CD4-positive, alpha-beta memory T cell (primary cell): ENCODE measurements at regions of chr12 and their contacts with region 1.

Region 1: GRCh38 chr12:57462251-57462911 is 2.8 kb downstream of the GLI1 start:
- DNase-seq: peak; percentile 84 to 88 (median 87)
- H3K4me3 ChIP-seq: peak overlapping the region; percentile 42 to 59
- H3K4me3 Mint-ChIP-seq: peak overlapping the region; percentile 86 to 95 (median 89)
- H3K27ac ChIP-seq: no peak overlapping the region
- H3K27ac Mint-ChIP-seq: peak overlapping the region; percentile 13 to 91 (median 80)
- H3K4me1 ChIP-seq: peaks cover 36% of the 10 kb centered on the region
- H3K4me1 Mint-ChIP-seq: peaks cover 23 to 58% (median 35%) of the 10 kb centered on the region in 4 donors
- H3K27me3 ChIP-seq: peaks cover 12% of the 10 kb centered on the region
- H3K27me3 Mint-ChIP-seq: peaks cover 7 to 18% of the 10 kb centered on the region in 2 donors

Region 2: GRCh38 chr12:57309420-57309819 is 153.0 kb before region 1 on chr12:
- CTCF ChIA-PET with region 1: interaction called, 7 read pairs
- POLR2A ChIA-PET with region 1: no interaction called
- intact Hi-C with region 1: loop called (anchors 5 kb)
- DNase-seq: no peak
- H3K4me3 ChIP-seq: no peak overlapping the region
- H3K4me3 Mint-ChIP-seq: no peak overlapping the region
- H3K27ac ChIP-seq: no peak overlapping the region
- H3K27ac Mint-ChIP-seq: peak overlapping the region in 1 of 7 donors; percentile 40
- H3K4me1 ChIP-seq: no peaks in the 10 kb centered on the region
- H3K4me1 Mint-ChIP-seq: peaks cover 0 to 4% (median 2%) of the 10 kb centered on the region in 4 donors
- H3K27me3 ChIP-seq: no peaks in the 10 kb centered on the region
- H3K27me3 Mint-ChIP-seq: no peaks in the 10 kb centered on the region

Region 3: DNA sequence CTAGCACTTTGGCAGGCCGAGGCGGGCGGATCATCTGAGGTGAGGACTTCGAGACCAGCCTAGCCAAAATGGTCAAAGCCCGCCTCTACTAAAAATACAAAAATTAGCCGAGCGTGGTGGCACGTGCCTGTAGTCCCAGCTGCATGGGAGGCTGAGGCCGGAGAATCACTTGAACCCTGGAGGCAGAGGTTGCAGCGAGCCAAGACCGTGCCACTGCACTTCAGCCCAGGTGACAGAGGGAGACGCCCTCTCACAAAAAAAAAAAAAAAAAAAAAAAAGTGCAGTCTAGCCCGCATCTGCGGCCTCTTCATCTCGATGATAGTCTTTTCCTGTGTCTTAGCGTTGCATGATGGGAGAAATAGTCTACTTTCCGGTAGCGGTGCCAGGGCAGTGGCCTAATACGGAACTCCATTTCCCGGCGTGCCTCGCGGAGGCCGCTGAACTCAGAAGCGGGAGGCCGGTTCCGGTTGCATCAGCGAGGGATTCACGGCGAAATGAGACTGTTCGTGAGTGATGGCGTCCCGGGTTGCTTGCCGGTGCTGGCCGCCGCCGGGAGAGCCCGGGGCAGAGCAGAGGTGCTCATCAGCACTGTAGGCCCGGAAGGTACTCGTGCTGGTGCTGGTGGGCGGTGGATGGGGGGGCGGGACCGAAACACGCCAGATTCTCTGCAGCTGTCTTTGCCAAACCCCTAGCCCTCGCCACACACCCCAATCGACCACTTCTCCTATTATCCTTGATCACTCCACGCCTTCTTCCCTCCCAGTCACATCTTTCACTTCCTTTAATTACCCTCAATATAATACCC is 25.4 kb after region 1 on chr12 and contains the start of gene MARS1:
- CTCF ChIA-PET with region 1: interaction called, 204 read pairs
- POLR2A ChIA-PET with region 1: interaction called, 225 read pairs
- intact Hi-C with region 1: loop called (anchors 1 kb)
- DNase-seq: peak; percentile 90 to 97 (median 94)
- H3K4me3 ChIP-seq: peak within 1 kb of the TSS; percentile 78 to 95
- H3K4me3 Mint-ChIP-seq: peak within 1 kb of the TSS; percentile 95 to 99 (median 98)
- H3K27ac ChIP-seq: peak within 1 kb of the TSS; percentile 84
- H3K27ac Mint-ChIP-seq: peak within 1 kb of the TSS; percentile 90 to 99 (median 98)
- H3K4me1 ChIP-seq: peaks cover 23% of the 10 kb centered on the region
- H3K4me1 Mint-ChIP-seq: peaks cover 22 to 43% (median 28%) of the 10 kb centered on the region in 4 donors
- H3K27me3 ChIP-seq: no peaks in the 10 kb centered on the region
- H3K27me3 Mint-ChIP-seq: no peaks in the 10 kb centered on the region
- total RNA-seq, gene MARS1: 224 to 242 TPM

Region 4: GRCh38 chr12:57546438-57547383 is 84.3 kb after region 1 on chr12 and contains the start of gene DCTN2:
- CTCF ChIA-PET with region 1: interaction called, 15 read pairs
- POLR2A ChIA-PET with region 1: interaction called, 12 read pairs
- intact Hi-C with region 1: no loop called
- DNase-seq: peak; percentile 91 to 97 (median 93)
- H3K4me3 ChIP-seq: peak within 1 kb of the TSS; percentile 54 to 71
- H3K4me3 Mint-ChIP-seq: peak within 1 kb of the TSS; percentile 93 to 100 (median 98)
- H3K27ac ChIP-seq: peak within 1 kb of the TSS; percentile 84
- H3K27ac Mint-ChIP-seq: peak within 1 kb of the TSS; percentile 84 to 99 (median 97)
- H3K4me1 ChIP-seq: peaks cover 37% of the 10 kb centered on the region
- H3K4me1 Mint-ChIP-seq: peaks cover 32 to 53% (median 42%) of the 10 kb centered on the region in 4 donors
- H3K27me3 ChIP-seq: no peaks in the 10 kb centered on the region
- H3K27me3 Mint-ChIP-seq: peaks cover 2 to 4% of the 10 kb centered on the region in 2 donors
- total RNA-seq, gene DCTN2: 69.4 to 70.7 TPM

Region 5: GRCh38 chr12:57632694-57633477 is 170.5 kb after region 1 on chr12 and contains the start of gene B4GALNT1:
- CTCF ChIA-PET with region 1: interaction called, 13 read pairs
- POLR2A ChIA-PET with region 1: interaction called, 5 read pairs
- intact Hi-C with region 1: loop called (anchors 1 kb)
- DNase-seq: peak in 4 of 5 donors; percentile 57 to 70 (median 61)
- H3K4me3 ChIP-seq: peak within 1 kb of the TSS in 1 of 2 donors; percentile 45
- H3K4me3 Mint-ChIP-seq: peak within 1 kb of the TSS; percentile 31 to 85 (median 74)
- H3K27ac ChIP-seq: no peak within 1 kb of the TSS
- H3K27ac Mint-ChIP-seq: peak within 1 kb of the TSS in 1 of 7 donors; percentile 17
- H3K4me1 ChIP-seq: peaks cover 13% of the 10 kb centered on the region
- H3K4me1 Mint-ChIP-seq: peaks cover 7 to 13% (median 9%) of the 10 kb centered on the region in 4 donors
- H3K27me3 ChIP-seq: peaks cover 25% of the 10 kb centered on the region
- H3K27me3 Mint-ChIP-seq: peaks cover 34 to 47% of the 10 kb centered on the region in 2 donors
- total RNA-seq, gene B4GALNT1: not detected